Adrenal gland (tissue), 19 donors: ENCODE measurements at regions of chr16 and their contacts with region 1.

Region 1: DNA sequence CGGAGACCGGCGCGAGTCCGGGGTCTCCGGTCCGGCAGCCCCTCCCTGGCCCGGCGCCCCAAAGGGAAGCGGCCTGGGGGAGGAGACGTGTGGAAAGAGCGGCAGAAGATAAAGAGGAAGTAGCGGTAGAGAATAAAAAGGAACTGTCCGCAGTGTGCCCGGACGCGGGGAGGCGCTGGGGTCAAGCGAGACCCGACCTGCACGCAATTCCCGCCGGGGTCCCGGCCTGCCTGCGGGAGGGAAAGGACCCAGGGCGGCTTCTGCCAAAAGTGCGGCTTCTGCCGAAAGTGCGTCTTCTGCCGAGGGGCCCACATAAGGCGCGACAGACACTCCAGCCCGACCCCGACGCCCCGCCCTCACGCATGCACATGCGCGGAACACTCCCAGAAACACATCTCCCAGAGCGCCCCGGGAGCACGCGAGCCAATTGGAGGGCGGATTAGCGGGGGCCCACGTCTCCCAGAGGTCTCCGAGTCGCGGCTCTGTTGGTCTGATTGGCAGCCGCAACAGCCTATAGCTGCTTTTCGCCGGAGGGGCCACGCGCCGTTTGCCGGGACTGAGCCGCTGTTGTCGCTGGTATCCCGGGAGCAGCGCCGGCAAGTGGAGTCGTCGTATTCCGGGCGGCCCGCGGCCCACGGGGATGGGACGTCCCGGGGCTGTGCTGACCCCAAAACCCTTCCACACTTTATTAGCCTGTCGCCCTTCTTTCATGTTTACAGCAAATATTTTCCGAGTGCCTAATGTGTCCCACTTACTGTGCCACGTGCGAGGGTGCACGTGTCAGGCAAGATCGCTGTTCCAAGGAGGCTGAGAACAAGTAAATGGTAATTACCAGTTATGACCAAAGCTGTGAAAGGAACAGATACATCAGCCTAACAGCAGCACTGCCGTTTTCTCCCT is 8.0 kb upstream of the MEFV start:
- DNase-seq: peak; percentile 98 to 99 (median 98)
- H3K4me3 ChIP-seq: peak overlapping the region; percentile 42 to 83 (median 76)
- H3K27ac ChIP-seq: peak overlapping the region; percentile 94 to 98 (median 95)
- H3K4me1 ChIP-seq: peaks cover 0 to 22% of the 10 kb centered on the region in 2 donors
- H3K27me3 ChIP-seq: no peaks in the 10 kb centered on the region
- CTCF ChIP-seq: peak in 3 of 6 experiments; percentile 21 to 40 (median 25)
- POLR2A ChIP-seq: peak in 1 of 2 donors; percentile 84

Region 2: GRCh38 chr16:2983706-2984136 is 280.7 kb before region 1 on chr16:
- intact Hi-C with region 1: no loop called
- DNase-seq: peak; percentile 64 to 90 (median 80)
- H3K4me3 ChIP-seq: peak overlapping the region in 1 of 4 donors; percentile 16
- H3K27ac ChIP-seq: no peak overlapping the region
- H3K4me1 ChIP-seq: peaks cover 12 to 24% of the 10 kb centered on the region in 2 donors
- H3K27me3 ChIP-seq: peaks cover 4% of the 10 kb centered on the region
- CTCF ChIP-seq: peak; percentile 55 to 93 (median 77)
- POLR2A ChIP-seq: no peak

Region 3: GRCh38 chr16:3150346-3151218 is 113.8 kb before region 1 on chr16:
- intact Hi-C with region 1: no loop called
- DNase-seq: peak; percentile 93 to 99 (median 96)
- H3K4me3 ChIP-seq: peak overlapping the region in 2 of 4 donors; percentile 23 to 53
- H3K27ac ChIP-seq: peak overlapping the region in 3 of 5 donors; percentile 66 to 83 (median 82)
- H3K4me1 ChIP-seq: peaks cover 0 to 26% of the 10 kb centered on the region in 2 donors
- H3K27me3 ChIP-seq: no peaks in the 10 kb centered on the region
- CTCF ChIP-seq: no peak
- POLR2A ChIP-seq: no peak

Region 4: GRCh38 chr16:3490911-3491629 is 226.7 kb after region 1 on chr16:
- intact Hi-C with region 1: loop called in 1 of 2 experiments (anchors 10 kb)
- DNase-seq: peak in 1 of 7 donors; percentile 56
- H3K4me3 ChIP-seq: no peak overlapping the region
- H3K27ac ChIP-seq: no peak overlapping the region
- H3K4me1 ChIP-seq: no peaks in the 10 kb centered on the region
- H3K27me3 ChIP-seq: no peaks in the 10 kb centered on the region
- CTCF ChIP-seq: no peak
- POLR2A ChIP-seq: no peak